ENCODE measurements at regions of chr14 and their contacts with region 1.

Region 1: GRCh38 chr14:64510825-64511671 is 6.5 kb downstream of the ZBTB1 start:
- DNase-seq: peak in 1 of 2 donors; percentile 84
- H3K4me3 ChIP-seq: no peak overlapping the region
- H3K27ac ChIP-seq: peak overlapping the region in 1 of 2 donors; percentile 44
- H3K4me1 ChIP-seq: peaks cover 8 to 33% of the 10 kb centered on the region in 2 donors
- H3K27me3 ChIP-seq: no peaks in the 10 kb centered on the region
- CTCF ChIP-seq: peak; percentile 75 to 87 (median 81)

Region 2: DNA sequence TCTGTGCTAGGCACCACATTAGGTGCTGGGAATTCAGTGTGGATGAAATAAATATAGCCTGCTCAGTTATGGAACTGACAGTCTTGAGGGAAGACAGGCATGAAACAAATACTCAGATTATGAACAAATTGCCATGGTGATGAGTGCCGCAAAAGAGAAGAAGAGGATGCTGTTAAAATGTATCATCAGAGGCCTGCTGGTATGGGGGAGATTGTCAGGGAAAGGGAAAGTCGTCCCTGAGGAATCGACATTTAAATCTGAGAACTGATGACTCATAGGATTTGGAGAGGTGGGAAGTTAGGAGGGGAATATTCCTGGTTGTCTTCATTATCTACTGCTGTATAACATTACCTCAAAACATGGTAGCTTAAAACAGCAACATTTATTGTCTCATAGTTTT is 80.8 kb after region 1 on chr14:
- intact Hi-C with region 1: no loop called
- DNase-seq: no peak
- H3K4me3 ChIP-seq: no peak overlapping the region
- H3K27ac ChIP-seq: no peak overlapping the region
- H3K4me1 ChIP-seq: no peaks in the 10 kb centered on the region
- H3K27me3 ChIP-seq: no peaks in the 10 kb centered on the region
- CTCF ChIP-seq: no peak

Region 3: DNA sequence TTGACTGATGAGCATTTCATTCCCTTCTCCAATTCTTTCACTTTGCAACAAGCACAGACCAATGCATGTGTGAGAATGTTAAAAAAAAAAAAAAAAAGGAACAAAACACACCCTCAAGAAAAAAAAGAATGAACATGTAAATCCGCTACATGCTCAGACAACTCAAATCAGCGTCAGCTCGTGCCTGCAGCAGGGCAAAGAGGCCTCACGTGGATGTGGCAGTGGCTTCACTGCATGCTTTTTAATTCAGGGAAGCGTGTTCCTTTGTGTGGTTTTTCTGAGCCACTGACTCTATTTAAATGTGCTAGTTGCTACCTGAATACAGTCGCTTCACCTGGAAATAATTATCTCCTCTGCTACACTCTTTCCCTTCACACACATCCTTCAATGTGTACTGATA is 93.8 kb after region 1 on chr14:
- intact Hi-C with region 1: no loop called
- DNase-seq: no peak
- H3K4me3 ChIP-seq: no peak overlapping the region
- H3K27ac ChIP-seq: no peak overlapping the region
- H3K4me1 ChIP-seq: no peaks in the 10 kb centered on the region
- H3K27me3 ChIP-seq: no peaks in the 10 kb centered on the region
- CTCF ChIP-seq: no peak

Region 4: GRCh38 chr14:64636208-64636979 is 125.3 kb after region 1 on chr14:
- intact Hi-C with region 1: loop called (anchors 1 kb)
- DNase-seq: peak in 1 of 2 donors; percentile 83
- H3K4me3 ChIP-seq: no peak overlapping the region
- H3K27ac ChIP-seq: no peak overlapping the region
- H3K4me1 ChIP-seq: no peaks in the 10 kb centered on the region
- H3K27me3 ChIP-seq: no peaks in the 10 kb centered on the region
- CTCF ChIP-seq: peak; percentile 78 to 93 (median 92)

Measured in ascending aorta (tissue), 2 donors.